ENCODE measurements at regions of chr5 and their contacts with region 1.

Region 1: GRCh38 chr5:150065361-150065760 is 21.0 kb downstream of the CSF1R start:
- DNase-seq: no peak
- H3K4me3 Mint-ChIP-seq: no peak overlapping the region
- H3K27ac Mint-ChIP-seq: no peak overlapping the region
- H3K4me1 Mint-ChIP-seq: peaks cover 23% of the 10 kb centered on the region
- H3K27me3 Mint-ChIP-seq: peaks cover 3% of the 10 kb centered on the region

Region 2: DNA sequence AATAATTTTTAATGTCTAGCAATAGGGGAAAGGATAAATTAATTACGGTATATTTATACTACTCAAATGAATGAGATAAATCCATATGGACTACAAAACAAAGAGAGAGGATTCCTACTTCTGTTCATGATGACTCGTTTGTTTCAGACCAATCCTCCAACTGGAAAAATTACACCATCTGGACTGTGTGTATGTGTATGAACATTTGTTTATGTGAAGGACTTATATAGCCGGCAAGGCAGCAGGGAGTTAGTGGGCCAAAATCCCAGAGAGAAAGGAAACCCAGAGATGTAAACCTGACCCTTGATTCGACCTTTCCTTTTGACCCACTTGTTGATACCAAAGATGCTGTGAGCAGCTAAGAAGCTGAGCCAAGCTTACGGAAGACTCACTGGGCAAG is 140.9 kb before region 1 on chr5:
- CTCF ChIA-PET with region 1: no interaction called
- POLR2A ChIA-PET with region 1: no interaction called
- DNase-seq: no peak
- H3K4me3 Mint-ChIP-seq: no peak overlapping the region
- H3K27ac Mint-ChIP-seq: no peak overlapping the region
- H3K4me1 Mint-ChIP-seq: no peaks in the 10 kb centered on the region
- H3K27me3 Mint-ChIP-seq: peaks cover 2% of the 10 kb centered on the region

Region 3: GRCh38 chr5:150052956-150053712 is 12.2 kb before region 1 on chr5:
- CTCF ChIA-PET with region 1: interaction called, 17 read pairs
- POLR2A ChIA-PET with region 1: no interaction called
- DNase-seq: no peak
- H3K4me3 Mint-ChIP-seq: no peak overlapping the region
- H3K27ac Mint-ChIP-seq: no peak overlapping the region
- H3K4me1 Mint-ChIP-seq: no peaks in the 10 kb centered on the region
- H3K27me3 Mint-ChIP-seq: no peaks in the 10 kb centered on the region

Measured in activated CD4-positive, alpha-beta T cell treated with anti-CD3 and anti-CD28 coated beads, Interleukin-2, amount 10 ng/mL, durations not matched to agents 7 days and 5 days (primary cell).